B cell (primary cell): ENCODE measurements at regions of chr21 and their contacts with region 1.

Region 1: DNA sequence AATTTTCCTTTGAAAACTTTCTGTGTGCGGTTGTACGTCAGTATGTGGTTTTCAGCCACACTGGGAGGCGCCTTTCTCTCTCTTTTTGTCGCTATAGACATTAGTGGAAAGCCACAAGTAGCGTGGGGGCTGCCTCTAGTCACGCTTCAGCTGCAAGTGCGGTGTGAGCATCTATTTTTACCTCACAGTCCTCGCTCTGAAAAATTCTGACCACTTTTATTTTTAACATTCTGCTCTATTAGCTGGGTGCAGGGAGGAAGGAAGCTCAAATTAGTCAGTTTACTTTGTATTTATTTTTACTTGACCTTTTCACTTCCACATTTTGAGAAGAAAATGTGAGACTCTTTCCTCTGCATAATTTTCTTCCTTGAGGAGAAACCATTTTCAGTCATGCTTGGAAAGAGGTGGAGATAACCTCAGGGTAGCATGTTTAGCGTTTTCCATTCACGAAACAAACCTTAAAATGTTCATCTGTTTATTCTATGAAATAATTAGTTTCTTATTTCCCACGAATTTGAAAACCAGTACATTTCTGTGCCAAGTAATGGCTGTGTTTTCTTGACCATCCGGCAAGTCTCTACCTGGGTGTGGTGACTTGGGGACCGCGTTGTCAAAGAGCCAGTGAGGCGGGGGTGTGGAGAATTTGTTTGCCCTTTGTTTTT is 35.6 kb downstream of the ADARB1 start:
- DNase-seq: peak; percentile 90
- ATAC-seq: peak; percentile 83
- H3K4me3 ChIP-seq: peak overlapping the region; percentile 22 to 60 (median 42)
- H3K4me3 Mint-ChIP-seq: peak overlapping the region; percentile 78
- H3K27ac ChIP-seq: peak overlapping the region; percentile 83 to 94
- H3K27ac Mint-ChIP-seq: peak overlapping the region; percentile 75
- H3K4me1 ChIP-seq: peaks cover 91 to 94% of the 10 kb centered on the region in 2 donors
- H3K4me1 Mint-ChIP-seq: peaks cover 91% of the 10 kb centered on the region
- H3K27me3 ChIP-seq: no peaks in the 10 kb centered on the region
- H3K27me3 Mint-ChIP-seq: no peaks in the 10 kb centered on the region
- CTCF ChIP-seq: no peak

Region 2: DNA sequence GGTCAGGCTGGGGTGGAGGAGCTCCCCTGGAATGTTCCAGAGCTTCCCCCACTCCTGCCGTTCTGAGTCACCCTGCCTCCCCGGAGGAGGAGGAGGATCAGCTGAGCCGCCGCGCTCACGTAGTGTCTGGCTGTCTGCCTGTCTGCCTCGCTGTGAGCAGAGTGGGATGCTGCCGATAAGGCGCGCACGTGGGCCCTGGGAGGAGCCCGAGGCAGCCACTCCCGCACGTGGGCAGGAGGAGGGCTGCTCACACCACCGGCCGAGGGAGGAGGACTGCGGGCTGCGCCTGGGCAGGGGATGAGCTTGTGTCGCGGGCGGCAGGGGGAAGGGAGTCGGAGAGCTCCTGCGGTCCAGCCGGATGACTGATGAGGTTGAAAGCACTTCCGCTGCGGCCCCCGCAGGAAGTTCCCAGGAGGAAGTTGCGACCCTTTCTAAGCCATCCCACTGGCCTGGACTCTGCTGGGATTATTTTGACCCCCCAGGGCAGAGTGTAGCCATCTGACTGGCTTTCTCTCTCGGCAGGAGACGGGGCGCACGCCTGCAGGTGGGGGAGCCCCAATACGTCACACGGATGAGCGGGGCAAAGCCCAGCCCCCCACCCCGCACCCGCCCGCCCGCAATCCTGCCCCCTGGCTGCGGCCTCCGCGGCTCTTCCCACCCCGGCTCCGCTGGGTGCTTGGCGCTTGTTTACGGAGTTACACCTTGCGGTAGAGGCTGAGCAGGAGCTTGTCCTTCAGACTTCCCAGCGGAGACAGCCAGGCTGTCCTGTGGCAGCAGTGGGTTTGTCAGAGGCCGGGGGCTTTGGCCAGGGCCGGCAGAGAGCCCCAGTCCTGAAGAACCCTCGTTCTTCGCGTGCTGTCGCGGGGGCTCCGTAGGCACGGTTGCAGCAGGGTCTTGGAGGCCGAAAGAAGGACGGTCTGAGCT is 1381.2 kb before region 1 on chr21:
- CTCF ChIA-PET with region 1: no interaction called
- POLR2A ChIA-PET with region 1: no interaction called
- intact Hi-C with region 1: loop called (anchors 5 kb)
- DNase-seq: peak; percentile 85
- ATAC-seq: peak; percentile 76
- H3K4me3 ChIP-seq: peak overlapping the region in 4 of 5 experiments; percentile 53 to 62 (median 60)
- H3K4me3 Mint-ChIP-seq: peak overlapping the region; percentile 95
- H3K27ac ChIP-seq: peak overlapping the region; percentile 18 to 77
- H3K27ac Mint-ChIP-seq: peak overlapping the region; percentile 86
- H3K4me1 ChIP-seq: peaks cover 44 to 54% of the 10 kb centered on the region in 2 donors
- H3K4me1 Mint-ChIP-seq: peaks cover 48% of the 10 kb centered on the region
- H3K27me3 ChIP-seq: no peaks in the 10 kb centered on the region
- H3K27me3 Mint-ChIP-seq: no peaks in the 10 kb centered on the region
- CTCF ChIP-seq: peak; percentile 43

Region 3: DNA sequence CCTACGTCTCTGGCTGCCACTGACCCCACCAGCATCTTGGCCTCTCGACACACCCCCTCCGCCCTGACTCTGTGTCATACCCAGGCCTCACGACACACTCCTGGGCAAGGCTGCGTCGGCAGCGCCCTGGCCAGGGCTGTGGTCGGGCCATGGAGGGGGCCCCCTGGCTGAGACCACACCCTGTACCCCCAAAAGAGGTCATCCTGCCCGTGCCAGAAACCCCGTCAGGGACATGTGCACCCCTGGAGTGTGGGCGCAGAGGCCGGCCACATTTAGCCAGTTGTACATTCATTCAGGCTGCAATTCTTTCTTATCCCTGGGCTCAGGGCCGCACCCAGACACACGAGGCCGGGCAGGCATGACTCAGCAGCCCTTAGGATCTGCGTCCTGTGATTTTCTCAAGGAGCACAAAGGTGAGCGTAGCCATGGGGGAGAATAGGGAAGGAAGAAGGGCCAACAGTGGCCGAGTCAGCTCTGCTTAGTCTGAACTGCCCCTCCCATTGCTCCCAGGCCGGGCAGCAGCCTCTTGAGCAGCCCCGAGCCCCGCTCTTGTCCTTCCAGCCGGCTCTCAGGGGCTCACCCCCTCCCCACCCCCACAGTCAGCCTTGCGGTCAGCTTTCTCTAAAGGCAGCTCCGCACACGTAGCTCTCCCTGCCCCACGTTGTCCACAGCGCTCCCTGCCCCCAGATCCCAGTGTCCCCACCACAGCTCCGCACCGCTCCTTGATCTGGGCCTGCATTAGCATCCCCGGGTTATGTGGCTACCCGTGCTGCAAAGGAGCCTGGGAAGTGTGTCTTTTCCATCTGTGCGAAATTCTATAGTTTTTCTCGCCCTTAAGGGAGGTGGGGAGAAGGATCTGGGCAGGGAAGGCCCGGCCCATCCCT is 1341.7 kb before region 1 on chr21:
- CTCF ChIA-PET with region 1: no interaction called
- POLR2A ChIA-PET with region 1: no interaction called
- intact Hi-C with region 1: no loop called
- DNase-seq: no peak
- ATAC-seq: no peak
- H3K4me3 ChIP-seq: no peak overlapping the region
- H3K4me3 Mint-ChIP-seq: no peak overlapping the region
- H3K27ac ChIP-seq: no peak overlapping the region
- H3K27ac Mint-ChIP-seq: no peak overlapping the region
- H3K4me1 ChIP-seq: no peaks in the 10 kb centered on the region
- H3K4me1 Mint-ChIP-seq: peaks cover 9% of the 10 kb centered on the region
- H3K27me3 ChIP-seq: no peaks in the 10 kb centered on the region
- H3K27me3 Mint-ChIP-seq: peaks cover 7% of the 10 kb centered on the region
- CTCF ChIP-seq: no peak

Region 4: GRCh38 chr21:44568754-44569556 is 541.0 kb before region 1 on chr21:
- CTCF ChIA-PET with region 1: no interaction called
- POLR2A ChIA-PET with region 1: no interaction called
- intact Hi-C with region 1: loop called (anchors 5 kb)
- DNase-seq: no peak
- ATAC-seq: no peak
- H3K4me3 ChIP-seq: no peak overlapping the region
- H3K4me3 Mint-ChIP-seq: no peak overlapping the region
- H3K27ac ChIP-seq: no peak overlapping the region
- H3K27ac Mint-ChIP-seq: no peak overlapping the region
- H3K4me1 ChIP-seq: peaks cover 12 to 26% of the 10 kb centered on the region in 2 donors
- H3K4me1 Mint-ChIP-seq: peaks cover 25% of the 10 kb centered on the region
- H3K27me3 ChIP-seq: peaks cover 0 to 2% (median 0%) of the 10 kb centered on the region in 4 experiments
- H3K27me3 Mint-ChIP-seq: peaks cover 23% of the 10 kb centered on the region
- CTCF ChIP-seq: no peak

Region 5: GRCh38 chr21:45098867-45099266 is 11.1 kb before region 1 on chr21:
- CTCF ChIA-PET with region 1: interaction called, 14 read pairs
- POLR2A ChIA-PET with region 1: interaction called, 3 read pairs
- intact Hi-C with region 1: no loop called
- DNase-seq: peak; percentile 42
- ATAC-seq: no peak
- H3K4me3 ChIP-seq: no peak overlapping the region
- H3K4me3 Mint-ChIP-seq: peak overlapping the region; percentile 16
- H3K27ac ChIP-seq: peak overlapping the region in 1 of 2 donors; percentile 6
- H3K27ac Mint-ChIP-seq: peak overlapping the region; percentile 60
- H3K4me1 ChIP-seq: peaks cover 74 to 81% of the 10 kb centered on the region in 2 donors
- H3K4me1 Mint-ChIP-seq: peaks cover 77% of the 10 kb centered on the region
- H3K27me3 ChIP-seq: no peaks in the 10 kb centered on the region
- H3K27me3 Mint-ChIP-seq: no peaks in the 10 kb centered on the region
- CTCF ChIP-seq: peak; percentile 32

Region 6: GRCh38 chr21:45130324-45130774 is 20.4 kb after region 1 on chr21:
- CTCF ChIA-PET with region 1: interaction called, 106 read pairs
- POLR2A ChIA-PET with region 1: interaction called, 5 read pairs
- intact Hi-C with region 1: loop called (anchors 1 kb)
- DNase-seq: no peak
- ATAC-seq: no peak
- H3K4me3 ChIP-seq: no peak overlapping the region
- H3K4me3 Mint-ChIP-seq: no peak overlapping the region
- H3K27ac ChIP-seq: no peak overlapping the region
- H3K27ac Mint-ChIP-seq: no peak overlapping the region
- H3K4me1 ChIP-seq: peaks cover 55 to 57% of the 10 kb centered on the region in 2 donors
- H3K4me1 Mint-ChIP-seq: peaks cover 62% of the 10 kb centered on the region
- H3K27me3 ChIP-seq: no peaks in the 10 kb centered on the region
- H3K27me3 Mint-ChIP-seq: no peaks in the 10 kb centered on the region
- CTCF ChIP-seq: no peak

Region 7: DNA sequence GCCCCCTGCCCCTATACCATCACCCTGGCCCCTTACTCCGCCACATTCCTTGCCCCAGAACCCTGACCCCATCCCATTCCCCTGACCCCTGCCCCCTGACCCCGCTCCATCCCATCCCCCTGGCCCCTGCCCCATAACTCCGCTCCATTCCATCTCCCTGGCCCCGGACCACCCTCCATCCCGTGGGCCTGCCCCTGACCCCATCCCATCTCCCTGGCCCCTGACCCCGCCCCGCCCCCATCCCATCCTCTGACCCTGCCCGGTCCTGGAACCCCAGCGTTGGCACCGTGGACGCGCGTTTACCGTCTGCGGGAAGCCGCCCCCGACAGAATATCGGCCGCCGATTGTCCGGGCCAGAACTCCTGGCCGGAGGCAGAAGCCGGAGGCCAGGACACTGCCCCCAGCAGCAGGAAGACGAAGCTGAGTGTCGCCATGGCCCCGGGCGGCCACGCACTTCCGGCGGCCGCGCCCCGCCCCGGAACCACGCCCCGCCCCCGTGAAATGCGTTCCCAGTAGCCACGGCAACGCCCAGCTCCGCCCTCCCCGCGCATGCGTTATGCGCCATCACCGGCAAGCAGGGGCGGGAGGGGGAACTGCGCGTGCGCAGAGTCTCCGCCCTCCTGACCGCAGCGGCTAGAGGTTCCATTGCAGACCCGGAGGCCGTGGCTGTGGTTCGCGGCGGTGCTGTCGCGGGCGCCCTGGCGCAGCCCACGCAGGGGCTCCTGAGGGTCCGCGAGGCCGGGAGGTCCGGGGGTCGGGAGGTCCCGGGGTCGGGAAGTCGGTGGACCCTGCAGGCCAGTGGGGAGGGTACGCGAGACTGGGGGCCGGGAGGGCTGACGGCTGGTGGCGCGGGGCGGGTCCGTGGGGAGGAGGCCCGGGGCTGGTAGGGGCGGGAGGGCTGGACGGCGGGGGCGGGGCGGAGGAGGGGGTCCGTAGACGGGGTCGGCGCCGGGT is 177.8 kb after region 1 on chr21 and contains the start of gene POFUT2:
- CTCF ChIA-PET with region 1: no interaction called
- POLR2A ChIA-PET with region 1: no interaction called
- intact Hi-C with region 1: no loop called
- DNase-seq: peak; percentile 98
- ATAC-seq: peak; percentile 88
- H3K4me3 ChIP-seq: peak within 1 kb of the TSS in 4 of 5 experiments; percentile 62 to 83 (median 74)
- H3K4me3 Mint-ChIP-seq: peak within 1 kb of the TSS; percentile 90
- H3K27ac ChIP-seq: peak within 1 kb of the TSS; percentile 47 to 82
- H3K27ac Mint-ChIP-seq: peak within 1 kb of the TSS; percentile 96
- H3K4me1 ChIP-seq: peaks cover 10 to 19% of the 10 kb centered on the region in 2 donors
- H3K4me1 Mint-ChIP-seq: peaks cover 15% of the 10 kb centered on the region
- H3K27me3 ChIP-seq: no peaks in the 10 kb centered on the region
- H3K27me3 Mint-ChIP-seq: no peaks in the 10 kb centered on the region
- CTCF ChIP-seq: no peak
- total RNA-seq, gene POFUT2: 38.3 and 44.5 TPM in 2 replicates